Mammary epithelial cell (primary cell): ENCODE measurements at regions of chr7 and their contacts with region 1.

Region 1: DNA sequence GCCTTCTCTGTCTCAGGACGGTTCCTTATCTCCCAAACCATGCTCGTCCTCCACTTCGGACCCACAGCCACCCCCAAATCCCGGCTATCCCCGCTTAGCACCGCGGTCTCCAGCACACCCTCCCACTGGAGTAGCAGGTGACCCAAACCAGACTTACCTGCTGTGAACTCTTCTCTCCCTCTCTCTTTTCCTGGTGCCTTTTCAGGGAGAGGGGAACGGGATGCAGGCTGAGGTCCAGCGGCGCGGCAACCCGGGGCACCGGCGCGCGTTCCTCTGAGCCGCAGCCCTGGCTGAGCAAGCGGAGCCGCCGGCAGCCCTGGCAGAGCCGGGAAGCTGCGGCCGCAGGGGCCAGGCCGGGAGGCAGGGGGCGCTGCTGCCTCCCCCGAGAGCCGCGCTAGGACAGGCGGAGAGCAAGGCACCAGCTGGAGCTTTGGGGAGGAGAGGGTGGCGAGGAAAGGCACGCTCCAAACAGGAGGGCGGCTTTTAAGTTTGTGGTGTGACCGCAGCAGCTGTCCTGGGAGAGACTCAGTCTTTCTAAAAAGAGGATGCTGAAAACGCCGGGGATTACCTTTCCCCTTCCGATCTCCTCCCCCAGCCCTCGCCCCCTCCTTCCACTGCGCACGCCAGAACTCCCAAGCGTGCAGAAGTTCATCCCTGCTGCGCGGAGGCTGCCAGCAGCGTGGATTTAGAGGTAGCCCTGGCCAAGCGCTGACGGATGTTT is at the start of gene SEMA3D:
- DNase-seq: peak; percentile 86
- H3K4me3 ChIP-seq: peak within 1 kb of the TSS; percentile 82 to 88 (median 85)
- H3K27ac ChIP-seq: no peak within 1 kb of the TSS
- H3K4me1 ChIP-seq: peaks cover 11% of the 10 kb centered on the region
- H3K27me3 ChIP-seq: no peaks in the 10 kb centered on the region
- CTCF ChIP-seq: peak; percentile 80 to 88
- total RNA-seq, gene SEMA3D: 3.5 to 9.5 TPM

Region 2: GRCh38 chr7:85114342-85114741 is 72.3 kb before region 1 on chr7:
- CTCF ChIA-PET with region 1: no interaction called
- dilution Hi-C with region 1: no loop called
- in situ Hi-C with region 1: no loop called
- intact Hi-C with region 1: loop called (anchors 2 kb)
- DNase-seq: peak; percentile 59
- H3K4me3 ChIP-seq: no peak overlapping the region
- H3K27ac ChIP-seq: peak overlapping the region; percentile 13
- H3K4me1 ChIP-seq: peaks cover 21% of the 10 kb centered on the region
- H3K27me3 ChIP-seq: no peaks in the 10 kb centered on the region
- CTCF ChIP-seq: no peak

Region 3: DNA sequence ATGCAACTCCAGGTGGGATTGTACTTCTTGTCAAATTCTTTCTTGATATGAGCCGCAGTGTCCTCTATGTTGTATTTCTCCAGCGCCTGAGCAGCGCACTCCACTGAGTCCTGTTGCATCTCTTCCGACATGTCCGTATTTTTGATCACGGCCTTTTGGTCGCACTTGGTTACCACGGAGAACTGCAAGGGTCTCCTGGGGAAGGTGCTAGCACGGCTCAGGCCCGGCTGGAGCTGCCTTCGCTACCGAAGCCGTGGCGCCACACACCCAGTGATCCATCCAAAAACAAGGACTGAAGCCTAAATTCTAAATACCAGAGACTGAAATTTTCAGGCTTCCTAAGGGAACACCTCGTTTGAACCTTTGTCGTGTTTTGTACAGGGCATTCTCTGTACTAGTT is 194.5 kb after region 1 on chr7:
- CTCF ChIA-PET with region 1: no interaction called
- dilution Hi-C with region 1: no loop called
- in situ Hi-C with region 1: no loop called
- intact Hi-C with region 1: no loop called
- DNase-seq: no peak
- H3K4me3 ChIP-seq: no peak overlapping the region
- H3K27ac ChIP-seq: no peak overlapping the region
- H3K4me1 ChIP-seq: no peaks in the 10 kb centered on the region
- H3K27me3 ChIP-seq: peaks cover 2% of the 10 kb centered on the region
- CTCF ChIP-seq: no peak

Region 4: DNA sequence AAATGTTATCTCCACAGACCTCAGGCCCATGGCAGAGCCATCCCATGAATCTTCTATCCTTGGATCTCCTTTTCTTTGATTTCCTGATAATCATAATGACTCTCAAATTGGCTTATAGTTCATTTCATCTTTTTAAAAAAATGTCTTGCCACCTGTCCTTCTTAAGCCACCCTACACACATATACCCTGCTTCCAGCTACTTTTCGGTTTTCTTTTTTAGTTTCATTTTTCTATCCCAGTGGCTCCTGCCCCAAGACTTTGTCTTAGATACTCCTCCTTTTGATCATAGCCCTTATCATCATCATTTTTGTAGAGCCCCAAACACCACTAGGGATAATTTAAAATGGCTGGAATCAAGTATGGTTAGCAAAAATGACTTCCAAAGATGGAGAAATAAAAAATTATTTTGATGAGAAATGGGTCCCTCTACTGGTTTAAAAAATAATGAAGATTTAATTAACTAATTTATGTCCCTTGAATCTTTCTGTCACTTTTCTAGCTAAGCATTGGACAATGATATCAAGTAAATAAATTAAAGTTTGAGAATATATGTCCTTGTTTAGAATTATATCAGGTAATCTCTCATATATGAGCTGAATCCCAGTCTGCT is 277.5 kb after region 1 on chr7:
- CTCF ChIA-PET with region 1: interaction called, 6 read pairs
- dilution Hi-C with region 1: no loop called
- in situ Hi-C with region 1: no loop called
- intact Hi-C with region 1: loop called (anchors 5 kb)
- DNase-seq: no peak
- H3K4me3 ChIP-seq: no peak overlapping the region
- H3K27ac ChIP-seq: no peak overlapping the region
- H3K4me1 ChIP-seq: no peaks in the 10 kb centered on the region
- H3K27me3 ChIP-seq: no peaks in the 10 kb centered on the region
- CTCF ChIP-seq: peak; percentile 19 to 21

Region 5: GRCh38 chr7:85750454-85750949 is 563.8 kb after region 1 on chr7:
- CTCF ChIA-PET with region 1: no interaction called
- dilution Hi-C with region 1: no loop called
- in situ Hi-C with region 1: no loop called
- intact Hi-C with region 1: loop called (anchors 2 kb)
- DNase-seq: peak; percentile 21
- H3K4me3 ChIP-seq: no peak overlapping the region
- H3K27ac ChIP-seq: no peak overlapping the region
- H3K4me1 ChIP-seq: no peaks in the 10 kb centered on the region
- H3K27me3 ChIP-seq: peaks cover 2% of the 10 kb centered on the region
- CTCF ChIP-seq: peak; percentile 60 to 88

Region 6: GRCh38 chr7:85851571-85852193 is 665.0 kb after region 1 on chr7:
- CTCF ChIA-PET with region 1: no interaction called
- dilution Hi-C with region 1: no loop called
- in situ Hi-C with region 1: no loop called
- intact Hi-C with region 1: loop called (anchors 2 kb)
- DNase-seq: peak; percentile 13
- H3K4me3 ChIP-seq: no peak overlapping the region
- H3K27ac ChIP-seq: no peak overlapping the region
- H3K4me1 ChIP-seq: no peaks in the 10 kb centered on the region
- H3K27me3 ChIP-seq: no peaks in the 10 kb centered on the region
- CTCF ChIP-seq: peak; percentile 35 to 51